Common myeloid progenitor, CD34-positive (primary cell): ENCODE measurements at regions of chr11 and their contacts with region 1.

Region 1: DNA sequence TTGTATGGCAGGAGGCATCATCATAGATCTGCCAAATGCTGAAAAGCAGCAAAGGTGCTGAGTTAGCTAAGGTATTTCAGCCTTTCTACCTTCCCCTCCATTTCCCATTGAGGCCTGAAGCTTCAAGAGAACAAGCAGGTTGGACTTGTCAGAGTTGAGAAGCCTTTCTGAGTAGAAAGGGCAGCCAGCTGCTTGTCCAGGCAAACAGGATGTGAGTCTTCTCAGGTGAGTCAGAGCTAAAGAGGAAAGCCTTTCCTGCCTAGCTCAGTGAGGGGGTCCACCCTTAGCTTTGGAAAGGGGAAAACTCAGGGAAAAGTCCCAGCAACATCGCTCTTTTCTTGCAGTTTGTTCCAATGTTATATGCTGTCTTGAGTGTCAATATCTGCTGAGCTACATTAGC is 13.2 kb upstream of the MPZL2 start:
- DNase-seq: no peak
- H3K4me3 ChIP-seq: no peak overlapping the region
- H3K27ac ChIP-seq: no peak overlapping the region
- H3K4me1 ChIP-seq: no peaks in the 10 kb centered on the region
- H3K27me3 ChIP-seq: no peaks in the 10 kb centered on the region

Region 2: DNA sequence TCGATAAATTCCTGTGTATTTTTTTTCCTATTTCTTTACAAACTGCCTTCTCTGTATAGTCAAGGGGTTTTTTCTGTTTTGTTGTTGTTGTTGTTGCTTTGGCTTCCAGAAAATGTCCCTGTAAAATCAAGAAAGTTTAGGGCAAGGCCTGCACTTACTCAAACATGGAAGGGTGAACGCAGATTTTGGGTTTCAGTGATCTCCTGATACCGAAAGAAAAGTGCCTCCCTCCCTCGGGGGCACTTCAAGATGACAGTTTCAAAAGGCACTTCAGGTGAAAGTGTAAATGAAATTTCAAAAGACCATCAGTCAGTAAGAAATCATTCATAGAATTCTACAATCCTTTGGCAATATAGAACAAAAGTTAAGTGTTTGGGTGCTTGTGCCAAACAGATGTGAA is 243.9 kb before region 1 on chr11:
- CTCF ChIA-PET with region 1: no interaction called
- POLR2A ChIA-PET with region 1: no interaction called
- DNase-seq: no peak
- H3K4me3 ChIP-seq: no peak overlapping the region
- H3K27ac ChIP-seq: no peak overlapping the region
- H3K4me1 ChIP-seq: no peaks in the 10 kb centered on the region
- H3K27me3 ChIP-seq: no peaks in the 10 kb centered on the region

Region 3: GRCh38 chr11:118088477-118088920 is 188.8 kb before region 1 on chr11:
- CTCF ChIA-PET with region 1: no interaction called
- POLR2A ChIA-PET with region 1: no interaction called
- DNase-seq: peak; percentile 54 to 96 (median 93)
- H3K4me3 ChIP-seq: no peak overlapping the region
- H3K27ac ChIP-seq: peak overlapping the region in 1 of 2 experiments; percentile 17
- H3K4me1 ChIP-seq: peaks cover 4 to 53% (median 25%) of the 10 kb centered on the region in 4 experiments
- H3K27me3 ChIP-seq: no peaks in the 10 kb centered on the region

Region 4: DNA sequence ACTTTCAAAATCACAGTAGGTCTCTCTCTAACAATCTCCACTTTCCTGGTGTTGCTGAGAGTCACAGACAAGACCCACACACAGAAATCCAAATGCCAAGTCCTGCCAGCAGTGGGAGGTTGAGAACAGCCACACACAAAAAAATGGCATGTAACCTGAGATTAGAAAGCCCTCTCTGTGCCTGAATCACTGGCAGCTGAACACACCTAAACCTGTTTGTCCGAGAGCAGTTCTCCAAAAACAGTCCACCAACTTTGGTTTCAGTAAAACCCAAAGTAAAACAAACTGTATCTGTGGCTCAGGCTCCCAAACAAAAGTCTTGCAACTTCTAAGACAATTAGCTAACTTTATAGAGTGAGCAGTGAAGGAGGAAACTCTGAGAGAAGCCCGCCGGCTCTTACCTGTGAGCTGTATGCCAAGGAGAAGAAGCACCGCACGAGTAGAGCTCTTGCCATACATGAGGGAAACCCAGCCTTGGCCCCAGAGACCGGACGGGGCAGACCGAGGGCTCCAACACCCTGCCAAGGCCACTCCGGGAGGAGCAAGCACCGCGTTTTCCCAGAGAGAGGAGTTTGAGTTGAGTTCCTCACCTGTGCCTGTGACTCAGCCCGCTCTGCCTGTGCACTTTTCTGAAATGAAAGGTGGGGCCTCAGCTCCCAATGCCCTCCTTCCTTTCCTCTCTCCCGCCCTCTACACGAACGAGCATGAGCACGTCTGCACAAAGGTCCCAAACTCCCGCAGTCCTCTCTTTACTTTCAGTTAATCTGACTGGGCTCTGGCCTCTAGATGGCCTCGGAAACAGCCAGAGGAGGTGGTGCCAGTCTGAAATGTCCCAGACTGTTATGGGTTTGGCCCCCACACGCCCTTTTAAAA is 13.4 kb before region 1 on chr11 and contains the start of gene MPZL2:
- CTCF ChIA-PET with region 1: interaction called, 21 read pairs
- POLR2A ChIA-PET with region 1: no interaction called
- DNase-seq: peak in 2 of 3 donors; percentile 19 to 31
- H3K4me3 ChIP-seq: peak within 1 kb of the TSS; percentile 3 to 81 (median 65)
- H3K27ac ChIP-seq: no peak within 1 kb of the TSS
- H3K4me1 ChIP-seq: peaks cover 5 to 24% (median 16%) of the 10 kb centered on the region in 4 experiments
- H3K27me3 ChIP-seq: no peaks in the 10 kb centered on the region

Region 5: DNA sequence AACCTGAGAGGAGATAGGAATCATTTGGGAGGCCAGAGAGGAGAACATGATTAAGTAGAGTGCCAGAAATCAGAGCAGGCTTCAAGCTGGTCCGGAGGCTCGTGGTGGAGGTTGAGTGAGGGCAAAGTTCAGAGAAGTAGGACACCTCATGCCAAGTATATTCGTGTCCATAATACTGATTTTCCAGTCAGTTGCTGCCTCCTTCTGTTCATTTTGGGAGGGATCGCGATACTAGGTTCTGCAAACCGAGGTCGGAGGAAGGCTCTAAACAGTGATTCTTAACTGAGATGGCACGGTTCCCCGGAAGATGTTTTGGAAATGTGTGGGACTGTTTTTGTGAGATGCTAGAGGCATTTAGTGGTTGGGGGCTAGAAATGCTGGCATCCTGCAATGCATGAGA is 13.6 kb after region 1 on chr11:
- CTCF ChIA-PET with region 1: interaction called, 15 read pairs
- POLR2A ChIA-PET with region 1: no interaction called
- DNase-seq: peak; percentile 60 to 69 (median 64)
- H3K4me3 ChIP-seq: no peak overlapping the region
- H3K27ac ChIP-seq: no peak overlapping the region
- H3K4me1 ChIP-seq: peaks cover 0 to 2% (median 0%) of the 10 kb centered on the region in 4 experiments
- H3K27me3 ChIP-seq: no peaks in the 10 kb centered on the region

Region 6: DNA sequence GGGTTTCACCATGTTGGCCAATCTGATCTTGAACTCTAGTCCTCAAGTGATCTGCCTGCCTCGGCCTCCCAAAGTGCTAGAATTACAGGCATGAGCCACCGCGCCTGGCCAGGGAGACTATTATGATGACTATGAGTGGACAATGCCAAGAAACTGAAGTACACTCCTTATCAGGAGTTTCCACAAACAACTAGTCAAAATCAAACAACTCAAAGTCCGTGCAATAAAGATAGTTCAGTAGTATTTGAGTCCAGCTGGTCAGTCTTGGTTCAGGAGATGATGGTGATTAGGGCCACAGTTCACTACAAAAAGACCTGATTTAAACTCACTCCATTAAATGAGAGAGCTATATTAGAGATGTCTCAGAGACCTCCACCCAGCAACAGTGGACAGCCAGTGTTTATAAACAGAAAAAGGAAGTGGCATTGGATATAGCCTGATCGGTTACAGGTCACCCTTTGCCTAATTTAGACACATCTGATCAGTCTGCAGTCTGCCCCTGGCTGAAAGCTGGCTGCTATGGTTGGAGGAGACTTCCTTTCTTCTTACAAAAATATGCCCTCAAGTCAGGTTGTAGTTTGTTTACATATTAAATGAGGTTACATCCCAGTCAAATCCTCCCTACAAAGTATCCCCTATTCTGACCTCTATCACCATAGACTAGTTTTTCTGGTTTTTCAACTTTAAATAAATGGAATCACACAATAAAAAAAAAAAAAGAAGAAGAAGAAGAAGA is 44.2 kb after region 1 on chr11:
- CTCF ChIA-PET with region 1: no interaction called
- POLR2A ChIA-PET with region 1: no interaction called
- DNase-seq: no peak
- H3K4me3 ChIP-seq: no peak overlapping the region
- H3K27ac ChIP-seq: no peak overlapping the region
- H3K4me1 ChIP-seq: peaks cover 8 to 53% (median 20%) of the 10 kb centered on the region in 4 experiments
- H3K27me3 ChIP-seq: no peaks in the 10 kb centered on the region